ENCODE measurements at regions of chr15 and their contacts with region 1.

Region 1: DNA sequence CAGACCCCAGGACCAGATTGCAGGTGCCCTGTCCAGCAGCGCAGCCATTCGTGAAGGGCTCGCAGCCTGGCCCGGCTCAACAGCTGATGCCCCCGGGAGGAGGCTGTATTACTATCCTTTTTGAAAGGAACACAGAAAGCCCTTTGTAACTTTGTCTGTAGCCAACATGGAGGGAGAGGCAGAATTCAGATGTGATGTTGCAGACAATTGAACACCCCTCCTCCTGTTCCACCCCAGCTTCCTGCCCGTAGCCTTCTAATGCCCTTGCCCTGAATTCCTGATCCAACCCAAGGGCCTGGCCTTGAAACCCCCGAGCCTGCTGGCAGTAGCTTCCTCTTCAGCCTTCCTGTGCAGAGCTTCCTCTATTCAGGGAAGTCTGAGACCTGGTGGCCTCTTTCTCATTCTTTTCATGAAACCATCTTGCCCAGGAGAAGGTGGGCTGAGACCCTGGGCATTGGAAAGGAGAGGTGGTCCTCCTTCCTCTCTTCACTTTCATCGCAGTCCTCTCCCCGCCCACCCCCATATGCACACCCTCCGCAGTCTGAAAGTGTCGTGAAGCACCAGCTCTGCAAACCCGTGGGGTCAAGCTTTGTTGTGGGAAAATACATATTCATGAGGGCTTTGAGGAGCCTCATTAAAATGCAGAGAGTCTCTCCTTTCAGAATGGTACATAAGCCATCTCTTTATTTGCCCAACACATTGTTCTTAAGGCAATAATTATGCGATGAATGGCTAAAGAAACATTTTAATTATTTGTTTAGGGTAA is 109.2 kb downstream of the APBA2 start:
- DNase-seq: peak in 1 of 7 donors; percentile 23
- H3K4me3 ChIP-seq: no peak overlapping the region
- H3K27ac ChIP-seq: no peak overlapping the region
- H3K4me1 ChIP-seq: no peaks in the 10 kb centered on the region
- H3K27me3 ChIP-seq: no peaks in the 10 kb centered on the region
- CTCF ChIP-seq: no peak
- POLR2A ChIP-seq: no peak

Region 2: DNA sequence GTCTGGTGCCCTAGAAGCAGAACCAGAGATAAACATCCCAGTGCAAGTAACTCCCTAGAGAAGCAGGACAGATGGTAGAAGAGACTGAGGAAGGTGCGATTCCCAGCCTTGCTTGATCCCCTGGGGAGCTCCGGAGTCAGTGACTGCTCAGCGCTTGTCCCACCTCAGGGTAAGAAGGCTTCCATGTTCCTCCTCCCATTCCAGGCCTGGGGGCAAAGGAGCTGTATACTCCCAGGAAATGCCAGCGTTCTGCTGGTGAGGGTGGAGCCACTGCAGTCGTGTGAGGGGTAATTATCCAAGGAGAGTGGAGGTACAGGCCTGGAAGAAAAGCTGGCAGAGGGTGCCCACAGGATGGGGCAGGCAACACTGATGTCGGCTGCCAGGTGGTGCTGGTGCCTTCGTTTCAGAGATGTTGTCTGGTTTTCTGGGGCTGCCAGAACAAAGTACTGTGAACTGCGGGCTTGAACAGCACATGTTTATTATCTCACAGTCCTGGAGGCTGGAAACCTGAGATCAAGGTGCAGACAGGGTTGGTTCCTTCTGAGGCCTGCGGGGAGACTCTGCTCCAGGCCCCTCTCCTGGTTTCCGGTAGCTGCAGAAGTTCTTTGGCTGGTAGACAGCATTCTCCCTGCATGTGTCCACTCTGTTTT is 121.3 kb before region 1 on chr15:
- intact Hi-C with region 1: loop called in 1 of 2 experiments (anchors 10 kb)
- DNase-seq: peak in 1 of 7 donors; percentile 73
- H3K4me3 ChIP-seq: no peak overlapping the region
- H3K27ac ChIP-seq: no peak overlapping the region
- H3K4me1 ChIP-seq: no peaks in the 10 kb centered on the region
- H3K27me3 ChIP-seq: no peaks in the 10 kb centered on the region
- CTCF ChIP-seq: peak in 1 of 6 experiments; percentile 25
- POLR2A ChIP-seq: no peak

Region 3: GRCh38 chr15:28955160-28956008 is 39.6 kb before region 1 on chr15:
- intact Hi-C with region 1: no loop called
- DNase-seq: peak in 1 of 7 donors; percentile 34
- H3K4me3 ChIP-seq: no peak overlapping the region
- H3K27ac ChIP-seq: no peak overlapping the region
- H3K4me1 ChIP-seq: no peaks in the 10 kb centered on the region
- H3K27me3 ChIP-seq: peaks cover 3% of the 10 kb centered on the region
- CTCF ChIP-seq: no peak
- POLR2A ChIP-seq: no peak

Region 4: GRCh38 chr15:29008846-29009245 is 13.8 kb after region 1 on chr15:
- intact Hi-C with region 1: no loop called
- DNase-seq: peak in 1 of 7 donors; percentile 13
- H3K4me3 ChIP-seq: no peak overlapping the region
- H3K27ac ChIP-seq: no peak overlapping the region
- H3K4me1 ChIP-seq: no peaks in the 10 kb centered on the region
- H3K27me3 ChIP-seq: no peaks in the 10 kb centered on the region
- CTCF ChIP-seq: no peak
- POLR2A ChIP-seq: no peak